ENCODE measurements at regions of chr12 and their contacts with region 1.

Region 1: GRCh38 chr12:33649992-33650391 is 210.4 kb upstream of the SYT10 start:
- DNase-seq: no peak
- H3K4me3 ChIP-seq: no peak overlapping the region
- H3K27ac ChIP-seq: no peak overlapping the region
- H3K4me1 ChIP-seq: no peaks in the 10 kb centered on the region
- H3K27me3 ChIP-seq: no peaks in the 10 kb centered on the region
- CTCF ChIP-seq: no peak

Region 2: GRCh38 chr12:33690562-33690961 is 40.6 kb after region 1 on chr12:
- CTCF ChIA-PET with region 1: no interaction called
- POLR2A ChIA-PET with region 1: no interaction called
- intact Hi-C with region 1: loop called (anchors 5 kb)
- DNase-seq: no peak
- H3K4me3 ChIP-seq: no peak overlapping the region
- H3K27ac ChIP-seq: no peak overlapping the region
- H3K4me1 ChIP-seq: no peaks in the 10 kb centered on the region
- H3K27me3 ChIP-seq: no peaks in the 10 kb centered on the region
- CTCF ChIP-seq: no peak